CD4-positive, alpha-beta memory T cell (primary cell): ENCODE measurements at regions of chr9 and their contacts with region 1.

Region 1: DNA sequence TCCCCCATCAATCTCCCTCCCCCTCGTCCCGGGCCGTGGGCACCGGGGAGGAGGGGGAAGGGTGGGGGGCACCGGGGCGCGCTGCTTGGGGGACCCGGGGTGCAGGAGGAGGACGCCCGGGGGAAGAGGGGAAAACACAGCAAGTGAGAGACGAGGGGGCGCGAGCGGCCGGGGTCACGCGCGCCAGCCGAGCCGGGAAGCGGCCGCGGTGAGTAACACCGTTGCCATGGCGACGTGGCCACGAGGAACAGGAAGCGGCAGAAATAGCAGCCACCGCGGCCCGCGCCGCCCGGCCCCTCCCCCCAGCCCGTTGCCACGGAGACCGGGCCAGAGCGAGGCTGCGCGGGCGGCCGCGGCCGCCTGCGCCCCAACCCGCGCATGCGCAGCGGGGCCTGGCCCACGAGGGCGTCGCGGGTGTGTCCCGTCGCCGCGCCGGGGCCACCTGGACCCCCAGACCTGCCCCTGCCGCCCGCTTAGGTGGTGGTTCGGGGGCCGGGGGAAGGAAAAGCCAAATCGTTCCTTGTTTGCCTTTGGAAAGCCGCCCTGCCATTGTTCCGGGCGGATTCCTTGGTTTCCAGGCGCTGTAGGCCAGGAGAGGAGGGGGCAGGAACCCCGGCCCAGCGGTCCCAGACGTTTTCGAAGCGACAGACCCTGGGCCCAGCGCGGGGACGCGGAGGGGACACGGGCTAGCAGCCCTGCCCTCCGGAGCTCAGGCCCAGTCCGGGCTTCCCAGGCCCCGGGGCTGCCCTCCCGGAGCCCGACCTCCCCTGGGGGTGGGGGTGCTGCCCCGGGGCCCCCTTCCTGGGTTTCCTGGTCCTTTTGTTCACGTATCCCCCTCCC is 207.1 kb downstream of the C9orf50 start:
- DNase-seq: peak; percentile 96 to 99 (median 98)
- H3K4me3 ChIP-seq: peak overlapping the region; percentile 29 to 53
- H3K4me3 Mint-ChIP-seq: peak overlapping the region; percentile 82 to 91 (median 86)
- H3K27ac ChIP-seq: peak overlapping the region; percentile 97
- H3K27ac Mint-ChIP-seq: peak overlapping the region; percentile 96 to 99 (median 98)
- H3K4me1 ChIP-seq: peaks cover 27% of the 10 kb centered on the region
- H3K4me1 Mint-ChIP-seq: peaks cover 16 to 34% (median 24%) of the 10 kb centered on the region in 4 donors
- H3K27me3 ChIP-seq: no peaks in the 10 kb centered on the region
- H3K27me3 Mint-ChIP-seq: no peaks in the 10 kb centered on the region

Region 2: DNA sequence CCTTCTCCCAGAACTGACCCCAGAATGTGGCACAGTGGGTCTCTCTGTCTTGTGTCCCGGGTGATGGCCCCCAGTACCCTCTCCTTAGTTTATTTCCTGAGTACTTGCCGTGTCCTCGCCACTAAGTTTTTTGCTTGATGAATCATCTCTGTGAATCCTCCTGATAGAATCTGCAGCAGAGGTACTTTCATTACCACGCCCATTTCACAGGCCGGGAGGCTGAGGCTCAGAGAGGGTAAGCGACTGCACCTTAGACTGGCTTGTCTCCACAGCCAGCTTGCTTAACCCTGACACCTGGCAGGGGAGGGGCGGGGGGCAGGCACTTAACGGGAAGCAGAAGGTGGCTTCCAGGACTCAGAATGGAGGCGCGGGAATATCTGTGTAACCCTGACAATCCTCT is 227.8 kb before region 1 on chr9:
- CTCF ChIA-PET with region 1: no interaction called
- POLR2A ChIA-PET with region 1: no interaction called
- intact Hi-C with region 1: no loop called
- DNase-seq: no peak
- H3K4me3 ChIP-seq: no peak overlapping the region
- H3K4me3 Mint-ChIP-seq: no peak overlapping the region
- H3K27ac ChIP-seq: no peak overlapping the region
- H3K27ac Mint-ChIP-seq: no peak overlapping the region
- H3K4me1 ChIP-seq: peaks cover 6% of the 10 kb centered on the region
- H3K4me1 Mint-ChIP-seq: peaks cover 7 to 13% (median 8%) of the 10 kb centered on the region in 4 donors
- H3K27me3 ChIP-seq: no peaks in the 10 kb centered on the region
- H3K27me3 Mint-ChIP-seq: no peaks in the 10 kb centered on the region

Region 3: DNA sequence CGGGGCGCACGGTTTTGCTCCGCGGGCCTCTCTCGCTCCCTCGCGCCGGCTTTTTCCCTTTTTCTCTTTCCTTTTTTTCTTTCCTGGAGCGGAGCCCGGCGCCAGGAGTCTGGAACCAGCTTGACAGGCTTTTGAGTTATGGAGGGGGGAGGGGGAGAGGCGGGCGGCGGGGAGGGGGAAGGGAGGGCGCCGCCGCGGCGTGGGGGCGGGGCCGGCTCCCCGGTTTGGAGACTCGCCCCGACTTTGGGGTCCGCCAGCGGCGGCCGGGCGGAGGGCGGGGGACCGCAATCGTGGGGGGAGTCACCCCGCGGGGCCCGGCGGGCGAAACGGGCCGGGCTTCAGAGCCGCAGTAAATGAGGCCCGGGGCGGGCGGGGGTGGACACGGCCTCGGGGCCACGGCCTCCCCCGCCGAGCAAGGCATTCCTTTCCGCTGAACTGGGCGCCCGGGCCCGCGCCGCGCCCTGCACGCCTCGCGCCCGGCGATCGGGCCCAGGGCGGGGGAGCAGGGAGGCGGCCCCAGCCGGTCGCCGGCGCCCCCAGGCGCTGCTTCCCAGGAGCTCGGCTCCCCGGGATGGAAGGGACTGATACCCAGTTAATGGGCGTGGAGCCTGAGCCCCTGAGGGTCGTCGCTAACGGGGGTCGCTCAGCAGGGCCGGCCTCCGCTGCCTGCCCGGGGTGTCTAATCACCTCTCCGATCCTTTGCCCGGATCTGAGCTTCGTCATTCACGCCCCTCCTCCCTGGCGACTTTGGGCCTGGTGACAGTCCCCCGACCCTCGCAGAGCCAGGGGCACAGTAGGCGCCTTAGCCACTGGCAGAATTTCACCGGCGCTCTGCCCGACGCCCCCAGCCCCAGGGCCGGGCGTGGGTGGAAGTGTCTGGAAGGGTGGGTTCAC is 69.0 kb after region 1 on chr9:
- CTCF ChIA-PET with region 1: no interaction called
- POLR2A ChIA-PET with region 1: interaction called, 14 read pairs
- intact Hi-C with region 1: no loop called
- DNase-seq: peak in 1 of 5 donors; percentile 38
- H3K4me3 ChIP-seq: peak overlapping the region in 1 of 2 donors; percentile 15
- H3K4me3 Mint-ChIP-seq: peak overlapping the region; percentile 55 to 81 (median 69)
- H3K27ac ChIP-seq: peak overlapping the region; percentile 62
- H3K27ac Mint-ChIP-seq: peak overlapping the region; percentile 57 to 93 (median 70)
- H3K4me1 ChIP-seq: peaks cover 31% of the 10 kb centered on the region
- H3K4me1 Mint-ChIP-seq: peaks cover 11 to 50% (median 25%) of the 10 kb centered on the region in 4 donors
- H3K27me3 ChIP-seq: no peaks in the 10 kb centered on the region
- H3K27me3 Mint-ChIP-seq: peaks cover 0 to 2% of the 10 kb centered on the region in 2 donors

Region 4: DNA sequence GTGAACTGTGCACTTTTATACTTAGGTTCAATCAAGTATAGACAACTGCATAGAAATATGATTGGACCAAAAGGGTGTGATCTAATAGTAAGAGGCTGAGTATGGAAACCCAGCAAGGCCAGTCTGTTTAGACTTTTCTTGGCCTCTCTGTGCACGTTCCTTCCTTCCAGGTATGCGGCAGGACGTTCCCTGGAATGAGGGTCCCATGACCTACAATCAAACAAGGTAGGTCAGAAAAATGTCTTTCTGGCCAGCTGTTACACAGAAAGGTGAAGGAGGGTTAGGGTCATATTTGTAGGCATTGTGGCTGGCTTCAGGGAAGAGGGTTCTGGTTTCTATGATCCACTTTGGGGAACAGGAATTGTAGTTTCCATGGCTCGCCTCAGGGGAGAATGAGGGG is 122.3 kb after region 1 on chr9:
- CTCF ChIA-PET with region 1: no interaction called
- POLR2A ChIA-PET with region 1: no interaction called
- intact Hi-C with region 1: no loop called
- DNase-seq: no peak
- H3K4me3 ChIP-seq: no peak overlapping the region
- H3K4me3 Mint-ChIP-seq: no peak overlapping the region
- H3K27ac ChIP-seq: no peak overlapping the region
- H3K27ac Mint-ChIP-seq: no peak overlapping the region
- H3K4me1 ChIP-seq: no peaks in the 10 kb centered on the region
- H3K4me1 Mint-ChIP-seq: no peaks in the 10 kb centered on the region
- H3K27me3 ChIP-seq: no peaks in the 10 kb centered on the region
- H3K27me3 Mint-ChIP-seq: peaks cover 3 to 5% of the 10 kb centered on the region in 2 donors